ENCODE measurements at regions of chr1 and their contacts with region 1.

Region 1: DNA sequence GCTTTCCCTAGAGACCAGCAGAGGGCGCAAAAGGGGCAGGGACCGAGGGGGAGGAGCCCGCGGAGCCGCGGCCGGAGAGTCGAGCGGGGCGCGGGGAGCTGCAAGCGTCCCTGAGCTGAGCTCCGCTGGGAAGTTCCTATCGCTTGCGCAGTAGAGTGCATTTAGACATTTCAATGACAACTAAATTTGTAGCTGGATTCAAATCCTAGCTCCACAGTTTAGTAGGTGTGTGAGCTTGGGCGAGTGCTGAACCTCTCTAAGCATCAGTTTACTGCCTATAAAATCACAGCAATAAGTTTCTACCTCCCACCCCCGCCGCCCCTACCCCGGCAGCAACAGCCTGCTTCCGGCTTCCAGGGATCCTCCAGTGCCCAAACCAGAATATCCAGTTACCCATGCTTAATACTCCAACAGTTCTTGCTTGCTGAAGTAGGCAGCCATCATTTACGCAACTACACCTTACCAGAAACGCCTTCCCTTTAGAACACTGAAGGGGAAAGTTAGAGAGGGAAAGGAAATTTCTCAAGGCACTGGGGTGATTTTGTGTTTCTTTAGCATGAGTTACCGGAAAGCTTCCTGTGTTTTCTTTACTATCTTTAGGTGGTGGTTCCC is 9.1 kb downstream of the TLR5 start:
- DNase-seq: peak; percentile 91
- H3K27ac ChIP-seq: peak overlapping the region; percentile 63
- CTCF ChIP-seq: peak; percentile 43

Region 2: DNA sequence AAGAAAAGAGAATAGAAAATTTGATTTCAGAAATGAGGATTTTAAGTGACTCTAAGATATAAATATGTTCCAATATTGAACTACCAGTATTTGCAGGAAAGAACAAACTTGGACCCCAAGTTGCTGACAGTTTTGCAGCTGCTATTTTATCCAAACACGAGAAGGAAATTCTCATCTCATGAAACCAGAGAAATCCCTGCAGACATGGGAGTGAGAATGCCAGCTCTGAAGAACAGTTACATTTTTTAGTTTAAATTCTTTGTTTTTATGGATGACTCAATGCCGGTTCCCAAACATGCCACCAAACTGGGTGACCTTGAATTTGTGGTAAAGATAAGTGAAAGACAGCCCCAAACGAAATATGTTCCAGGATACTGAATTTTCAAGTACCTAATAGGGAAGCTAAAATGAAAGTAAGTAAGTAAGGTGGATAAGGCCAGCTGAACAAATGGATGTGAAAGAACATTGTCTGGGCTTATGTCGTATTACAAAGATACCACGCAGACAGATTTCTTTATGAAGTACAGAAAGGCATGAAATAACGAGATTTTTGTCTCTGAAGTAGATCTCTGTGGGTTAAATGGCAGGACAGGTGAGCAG is 10.8 kb before region 1 on chr1:
- CTCF ChIA-PET with region 1: interaction called, 22 read pairs
- POLR2A ChIA-PET with region 1: no interaction called
- DNase-seq: no peak
- H3K27ac ChIP-seq: no peak overlapping the region
- CTCF ChIP-seq: no peak

Region 3: DNA sequence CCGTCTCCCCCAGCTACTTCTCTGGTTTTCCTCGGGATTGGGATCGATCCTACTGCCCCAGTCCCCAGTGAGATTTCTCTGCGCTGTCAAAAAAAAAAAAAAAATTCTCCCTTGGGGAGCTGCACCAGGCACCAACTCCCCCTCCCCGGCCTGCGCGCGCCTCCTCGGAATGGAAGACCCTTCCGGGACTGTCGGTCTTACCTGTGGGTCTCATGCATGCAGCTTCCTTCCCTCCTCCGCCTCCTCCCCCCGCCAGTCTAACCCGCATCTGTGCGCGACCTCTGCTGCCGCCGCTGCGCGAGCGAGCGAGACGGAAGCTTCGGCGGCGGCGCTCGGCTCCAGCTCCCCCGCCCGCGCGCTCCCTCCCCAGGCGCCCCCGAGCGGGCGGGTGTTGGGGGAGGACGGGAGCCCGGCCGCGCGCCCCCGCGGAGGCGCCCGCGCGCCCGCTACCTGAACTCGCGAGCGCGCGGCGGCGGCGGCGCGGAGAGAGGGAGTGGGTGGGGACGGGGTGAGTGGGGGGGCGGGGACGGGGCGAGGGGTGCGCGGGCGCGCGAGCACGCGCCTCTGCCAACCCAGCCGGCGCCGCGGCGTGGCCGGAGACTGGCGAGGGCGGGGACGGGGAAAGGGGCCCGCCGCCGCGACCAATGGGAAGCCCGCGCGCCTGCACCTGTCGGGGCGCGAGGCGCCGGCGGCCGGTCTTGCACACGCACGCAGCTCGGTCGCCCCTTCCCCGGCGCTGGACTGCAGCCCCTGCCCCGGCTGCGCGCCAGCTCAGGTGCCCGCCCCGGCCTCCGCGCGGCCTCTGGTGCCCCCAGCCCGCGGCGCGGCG is 230.1 kb after region 1 on chr1 and contains the start of gene SUSD4:
- CTCF ChIA-PET with region 1: interaction called, 14 read pairs
- POLR2A ChIA-PET with region 1: no interaction called
- DNase-seq: peak; percentile 31
- H3K27ac ChIP-seq: no peak within 1 kb of the TSS
- CTCF ChIP-seq: no peak

Region 4: GRCh38 chr1:223411309-223411708 is 277.4 kb after region 1 on chr1:
- CTCF ChIA-PET with region 1: no interaction called
- POLR2A ChIA-PET with region 1: no interaction called
- DNase-seq: no peak
- H3K27ac ChIP-seq: no peak overlapping the region
- CTCF ChIP-seq: no peak